Endothelial cell of umbilical vein (primary cell): ENCODE measurements at regions of chr6 and their contacts with region 1.

Region 1: DNA sequence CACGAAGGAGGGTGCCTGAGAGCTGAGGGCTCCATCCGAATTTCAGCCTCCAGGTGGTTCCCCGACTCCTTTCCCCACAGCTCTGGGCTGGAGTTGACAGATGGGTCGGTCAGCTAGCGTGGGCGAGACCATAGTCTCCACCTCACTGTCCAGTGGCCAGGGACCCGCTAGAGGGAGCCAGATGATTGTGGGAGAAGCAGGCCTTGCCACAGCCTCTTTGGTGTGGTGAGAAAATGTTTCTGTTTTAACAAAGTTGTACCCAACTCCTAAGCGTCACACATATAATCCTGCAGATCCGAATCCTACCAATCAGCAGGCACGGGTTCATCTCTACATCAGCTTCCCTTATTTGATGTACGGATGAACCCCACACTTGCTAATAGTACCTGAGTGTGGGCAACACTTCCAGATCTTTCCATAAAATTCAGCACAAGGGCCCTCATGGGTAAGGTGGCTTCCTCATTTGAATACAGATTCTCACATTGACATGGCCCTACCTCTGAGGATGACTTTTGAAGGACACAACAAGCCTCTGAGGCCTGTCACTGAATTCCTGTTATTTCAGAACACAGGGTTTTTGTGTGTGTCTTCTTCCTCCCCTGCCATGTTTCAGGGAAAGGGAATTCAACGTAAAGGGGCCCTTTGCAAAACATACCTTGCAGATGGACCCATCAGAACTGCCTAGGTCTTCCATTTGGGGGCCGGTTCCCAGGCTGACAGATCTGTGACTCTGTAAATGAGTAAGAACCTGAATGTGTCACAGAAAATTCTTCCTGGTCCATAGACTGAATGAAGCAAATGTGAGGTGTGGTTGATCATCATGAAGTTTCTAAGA is 103.2 kb upstream of the DUSP22 start:
- DNase-seq: peak; percentile 59
- H3K4me3 ChIP-seq: no peak overlapping the region
- H3K27ac ChIP-seq: no peak overlapping the region
- H3K4me1 ChIP-seq: no peaks in the 10 kb centered on the region
- H3K27me3 ChIP-seq: no peaks in the 10 kb centered on the region
- CTCF ChIP-seq: peak; percentile 79 to 87
- POLR2A ChIP-seq: no peak

Region 2: DNA sequence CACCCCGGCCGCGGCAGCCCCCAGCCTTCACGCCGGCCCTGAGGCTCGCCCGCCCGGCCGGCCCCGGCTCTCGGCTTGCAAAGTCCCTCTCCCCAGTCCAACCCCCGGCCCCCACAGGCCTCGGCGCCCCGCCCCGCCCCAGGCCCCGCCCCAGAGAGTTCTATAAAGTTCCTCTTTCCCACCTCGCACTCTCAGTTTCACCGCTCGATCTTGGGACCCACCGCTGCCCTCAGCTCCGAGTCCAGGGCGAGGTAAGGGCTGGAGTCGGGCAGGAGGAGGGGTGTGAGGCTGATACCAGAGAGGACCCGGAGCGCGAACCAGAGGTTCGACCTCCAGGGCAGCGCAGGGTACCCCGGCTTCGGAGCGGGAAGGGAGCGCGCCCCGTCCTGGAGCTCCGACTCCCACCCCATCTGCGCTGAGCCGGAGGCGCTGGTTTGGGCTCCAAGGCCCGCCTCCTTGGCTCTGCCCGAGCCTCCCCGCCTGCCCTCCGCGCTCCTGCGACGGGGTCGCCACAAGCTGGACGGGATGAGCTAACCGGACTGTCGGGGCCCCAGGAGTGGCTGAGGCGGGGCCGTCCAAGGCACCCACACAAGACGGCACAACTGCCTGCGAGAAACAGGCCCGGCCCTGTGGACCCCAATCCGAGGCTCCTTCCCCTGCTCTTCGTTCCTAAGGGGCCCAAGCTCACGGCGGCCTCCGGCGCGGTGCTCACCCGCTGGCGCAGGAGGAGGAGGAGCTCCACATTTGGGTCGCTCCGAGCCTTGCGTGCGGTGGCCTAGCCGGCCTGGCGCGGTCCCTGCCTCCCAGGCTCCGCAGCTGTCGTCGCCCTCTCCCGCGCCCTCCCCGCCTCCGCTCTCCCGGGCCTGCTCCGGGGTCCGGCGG is 202.8 kb after region 1 on chr6 and contains the start of gene IRF4:
- CTCF ChIA-PET with region 1: no interaction called
- POLR2A ChIA-PET with region 1: no interaction called
- dilution Hi-C with region 1: no loop called
- intact Hi-C with region 1: loop called (anchors 5 kb)
- DNase-seq: no peak
- H3K4me3 ChIP-seq: peak within 1 kb of the TSS in 1 of 3 experiments; percentile 4
- H3K27ac ChIP-seq: no peak within 1 kb of the TSS
- H3K4me1 ChIP-seq: peaks cover 6% of the 10 kb centered on the region
- H3K27me3 ChIP-seq: peaks cover 49 to 65% of the 10 kb centered on the region in 2 experiments
- CTCF ChIP-seq: no peak
- POLR2A ChIP-seq: no peak
- total RNA-seq, gene IRF4: not detected in 2 replicates

Region 3: DNA sequence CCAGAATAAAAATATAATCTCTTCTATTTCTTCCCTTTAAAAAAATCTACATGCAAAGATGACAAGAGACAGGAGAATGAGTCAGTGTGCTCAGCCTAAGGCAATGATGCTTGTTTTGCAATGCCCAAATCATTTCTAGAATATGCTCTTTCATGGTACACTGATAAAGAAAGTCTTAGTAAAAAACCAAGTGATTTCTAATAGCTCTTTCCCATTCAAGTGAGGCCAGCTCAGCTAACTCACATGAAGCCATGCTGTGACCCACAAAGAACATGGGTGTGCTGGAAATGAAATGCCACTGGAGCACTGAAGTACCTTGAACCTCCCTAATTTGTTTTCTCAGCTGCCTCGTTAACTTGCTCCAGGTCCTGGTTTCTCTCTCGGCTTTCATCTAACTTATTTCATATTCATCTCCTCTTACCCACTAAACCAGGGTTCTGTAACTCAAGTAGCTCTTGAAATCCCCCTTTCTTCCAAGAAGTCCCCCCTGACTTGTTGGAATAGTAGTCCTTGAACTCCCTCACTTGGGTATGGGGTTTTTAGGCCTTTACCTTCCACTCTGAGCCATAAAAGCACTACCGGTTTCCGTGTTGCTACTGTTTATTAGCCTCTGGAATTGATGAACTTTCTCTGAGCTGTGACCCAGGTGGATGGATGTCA is 295.2 kb after region 1 on chr6:
- CTCF ChIA-PET with region 1: no interaction called
- POLR2A ChIA-PET with region 1: no interaction called
- dilution Hi-C with region 1: no loop called
- intact Hi-C with region 1: loop called (anchors 5 kb)
- DNase-seq: no peak
- H3K4me3 ChIP-seq: no peak overlapping the region
- H3K27ac ChIP-seq: no peak overlapping the region
- H3K4me1 ChIP-seq: no peaks in the 10 kb centered on the region
- H3K27me3 ChIP-seq: no peaks in the 10 kb centered on the region
- CTCF ChIP-seq: no peak
- POLR2A ChIP-seq: no peak

Region 4: DNA sequence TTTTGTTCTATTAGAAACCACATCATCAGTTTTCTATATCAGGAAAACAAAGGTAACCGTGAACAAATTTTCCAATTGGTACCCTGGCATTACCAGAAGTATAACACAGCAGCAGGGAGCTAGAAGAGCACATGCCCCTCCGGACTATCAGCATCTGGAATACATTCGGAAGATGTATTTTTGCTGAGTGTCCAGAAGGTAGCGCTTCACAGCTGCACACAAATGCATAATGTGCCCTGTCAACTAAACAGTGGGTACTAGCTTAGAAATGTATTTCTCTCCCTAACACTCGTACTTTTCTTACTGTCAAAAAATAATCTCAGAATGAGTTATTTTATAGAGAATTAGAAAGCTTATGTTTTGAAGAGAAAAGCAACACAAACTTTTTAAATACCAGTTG is 390.3 kb after region 1 on chr6:
- CTCF ChIA-PET with region 1: interaction called, 6 read pairs
- POLR2A ChIA-PET with region 1: no interaction called
- dilution Hi-C with region 1: no loop called
- intact Hi-C with region 1: loop called (anchors 5 kb)
- DNase-seq: no peak
- H3K4me3 ChIP-seq: no peak overlapping the region
- H3K27ac ChIP-seq: no peak overlapping the region
- H3K4me1 ChIP-seq: no peaks in the 10 kb centered on the region
- H3K27me3 ChIP-seq: no peaks in the 10 kb centered on the region
- CTCF ChIP-seq: peak in 1 of 2 donors; percentile 8
- POLR2A ChIP-seq: no peak

Region 5: GRCh38 chr6:722077-722524 is 533.1 kb after region 1 on chr6:
- CTCF ChIA-PET with region 1: no interaction called
- POLR2A ChIA-PET with region 1: no interaction called
- dilution Hi-C with region 1: no loop called
- intact Hi-C with region 1: loop called (anchors 2 kb)
- DNase-seq: peak; percentile 77
- H3K4me3 ChIP-seq: no peak overlapping the region
- H3K27ac ChIP-seq: no peak overlapping the region
- H3K4me1 ChIP-seq: no peaks in the 10 kb centered on the region
- H3K27me3 ChIP-seq: no peaks in the 10 kb centered on the region
- CTCF ChIP-seq: peak; percentile 89 to 94
- POLR2A ChIP-seq: no peak

Region 6: DNA sequence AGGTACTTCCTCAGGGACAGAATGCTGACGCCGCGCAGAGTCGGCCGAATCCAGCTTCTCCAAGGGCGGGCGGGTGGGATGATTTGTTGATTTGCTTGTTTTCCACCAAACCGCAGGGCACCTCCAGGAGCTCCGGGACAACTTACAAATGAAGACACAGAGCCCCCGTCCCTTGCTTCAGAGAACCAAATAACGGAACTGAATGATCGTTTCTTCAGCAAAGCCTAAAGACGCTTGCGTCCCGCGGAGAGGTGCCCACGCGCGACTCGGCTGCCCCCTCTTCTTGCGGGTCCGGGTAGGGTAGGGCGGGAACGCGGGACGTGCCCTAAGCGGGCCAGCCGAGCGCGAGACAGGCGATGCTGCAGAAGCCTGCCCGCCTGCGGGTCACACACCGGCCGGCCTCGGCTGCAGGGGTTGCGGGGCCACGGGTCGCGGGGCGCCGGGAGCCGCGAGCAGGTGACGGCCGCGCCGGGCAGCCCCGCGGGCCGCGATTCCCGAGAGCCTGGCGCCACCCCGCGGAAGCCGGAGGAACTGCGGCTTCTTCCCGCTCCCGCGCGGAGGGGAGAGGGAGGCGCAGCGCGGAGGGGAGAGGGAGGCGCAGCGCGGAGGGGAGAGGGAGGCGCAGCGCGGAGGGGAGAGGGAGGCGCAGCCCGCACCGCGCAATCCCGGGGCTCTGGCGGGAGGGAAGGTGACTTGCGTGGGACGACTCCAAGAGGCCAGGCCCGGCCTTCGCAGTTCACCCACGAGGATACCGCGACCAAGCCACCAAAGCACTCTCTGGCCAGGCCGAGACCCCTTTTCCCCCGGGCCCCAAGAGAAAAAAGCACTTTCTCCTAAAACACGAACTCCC is 1192.7 kb after region 1 on chr6:
- CTCF ChIA-PET with region 1: interaction called, 10 read pairs
- POLR2A ChIA-PET with region 1: no interaction called
- dilution Hi-C with region 1: no loop called
- intact Hi-C with region 1: loop called (anchors 5 kb)
- DNase-seq: peak; percentile 3
- H3K4me3 ChIP-seq: no peak overlapping the region
- H3K27ac ChIP-seq: no peak overlapping the region
- H3K4me1 ChIP-seq: no peaks in the 10 kb centered on the region
- H3K27me3 ChIP-seq: peaks cover 88 to 98% of the 10 kb centered on the region in 2 experiments
- CTCF ChIP-seq: peak; percentile 73 to 74
- POLR2A ChIP-seq: no peak

Region 7: GRCh38 chr6:1436334-1437306 is 1247.6 kb after region 1 on chr6:
- CTCF ChIA-PET with region 1: interaction called, 22 read pairs
- POLR2A ChIA-PET with region 1: no interaction called
- dilution Hi-C with region 1: no loop called
- intact Hi-C with region 1: loop called (anchors 1 kb)
- DNase-seq: peak; percentile 70
- H3K4me3 ChIP-seq: no peak overlapping the region
- H3K27ac ChIP-seq: no peak overlapping the region
- H3K4me1 ChIP-seq: no peaks in the 10 kb centered on the region
- H3K27me3 ChIP-seq: no peaks in the 10 kb centered on the region
- CTCF ChIP-seq: peak; percentile 56 to 67
- POLR2A ChIP-seq: no peak